GM13976 (cell line): ENCODE measurements at regions of chr2 and their contacts with region 1.

Region 1: GRCh38 chr2:74482801-74483674 is at the starts of genes CCDC142 and TTC31:
- DNase-seq: peak; percentile 94
- CTCF ChIP-seq: peak; percentile 95

Region 2: GRCh38 chr2:74597410-74597809 is 114.4 kb after region 1 on chr2:
- in situ Hi-C with region 1: loop called (anchors 10 kb)
- DNase-seq: no peak
- CTCF ChIP-seq: no peak

Region 3: DNA sequence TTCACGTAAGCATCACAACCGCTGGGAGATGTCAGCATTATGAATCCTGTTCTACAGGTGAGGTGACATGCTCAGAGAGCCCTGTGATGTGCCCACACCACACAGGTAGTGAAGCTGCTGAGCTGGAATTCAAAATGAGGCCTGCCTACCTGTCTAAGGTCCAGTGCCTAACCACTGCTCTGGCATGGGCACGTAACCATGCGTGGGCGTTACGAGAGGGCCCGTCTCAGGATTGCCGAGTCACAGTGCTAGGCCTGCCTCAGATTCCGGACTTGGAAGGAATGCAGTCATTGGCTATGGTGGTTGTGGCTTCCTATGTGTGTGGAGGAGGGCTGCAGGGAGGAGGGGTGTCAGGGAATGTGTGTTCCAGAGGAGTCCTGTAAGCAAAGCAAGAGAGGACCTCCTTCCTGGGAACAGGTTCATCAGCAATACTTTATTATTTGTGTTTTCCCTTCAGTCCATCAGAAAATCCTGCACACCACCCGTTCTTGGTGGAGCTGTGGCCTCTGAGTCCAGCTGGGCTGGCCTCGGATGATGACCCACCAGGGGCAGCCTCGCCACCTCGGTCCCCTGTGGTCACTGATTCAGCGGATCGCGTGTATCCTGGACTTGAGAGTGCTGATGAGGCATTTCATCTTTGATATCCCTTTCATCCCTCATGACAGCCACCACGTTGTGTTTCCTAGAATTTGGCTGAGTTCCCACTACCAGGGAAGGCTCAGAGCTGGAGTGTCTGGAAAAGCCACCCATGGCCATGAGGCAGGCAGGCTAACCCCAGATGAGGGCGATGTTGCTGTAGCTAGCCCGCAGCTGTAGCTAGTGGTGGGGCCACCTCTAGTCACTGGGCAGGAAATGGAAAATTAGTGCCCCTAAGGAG is 382.0 kb after region 1 on chr2:
- in situ Hi-C with region 1: loop called (anchors 25 kb)
- DNase-seq: no peak
- CTCF ChIP-seq: no peak